Endothelial cell of umbilical vein (primary cell): ENCODE measurements at regions of chr18 and their contacts with region 1.

Region 1: DNA sequence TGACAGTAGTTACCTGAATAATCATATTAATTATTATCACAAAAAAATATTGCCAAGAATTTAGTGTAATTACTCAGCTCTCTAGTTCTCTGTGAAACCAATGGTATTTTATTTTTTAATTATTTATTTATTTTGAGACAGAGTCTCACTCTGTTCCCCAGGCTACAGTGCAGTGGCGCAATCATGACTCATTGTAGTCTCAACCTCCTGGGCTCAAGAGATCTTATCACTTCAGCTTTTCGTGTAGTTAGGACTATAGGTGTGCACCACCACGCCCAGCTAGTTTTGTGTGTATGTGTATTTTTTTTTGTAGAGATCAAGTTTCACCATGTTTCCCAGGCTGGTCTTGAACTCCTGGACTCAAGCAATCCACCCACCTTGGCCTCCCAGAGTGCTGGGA is 440.4 kb upstream of the CDH20 start:
- DNase-seq: no peak
- H3K4me3 ChIP-seq: no peak overlapping the region
- H3K27ac ChIP-seq: peak overlapping the region; percentile 68
- H3K4me1 ChIP-seq: peaks cover 29% of the 10 kb centered on the region
- H3K27me3 ChIP-seq: no peaks in the 10 kb centered on the region
- CTCF ChIP-seq: no peak
- POLR2A ChIP-seq: no peak

Region 2: DNA sequence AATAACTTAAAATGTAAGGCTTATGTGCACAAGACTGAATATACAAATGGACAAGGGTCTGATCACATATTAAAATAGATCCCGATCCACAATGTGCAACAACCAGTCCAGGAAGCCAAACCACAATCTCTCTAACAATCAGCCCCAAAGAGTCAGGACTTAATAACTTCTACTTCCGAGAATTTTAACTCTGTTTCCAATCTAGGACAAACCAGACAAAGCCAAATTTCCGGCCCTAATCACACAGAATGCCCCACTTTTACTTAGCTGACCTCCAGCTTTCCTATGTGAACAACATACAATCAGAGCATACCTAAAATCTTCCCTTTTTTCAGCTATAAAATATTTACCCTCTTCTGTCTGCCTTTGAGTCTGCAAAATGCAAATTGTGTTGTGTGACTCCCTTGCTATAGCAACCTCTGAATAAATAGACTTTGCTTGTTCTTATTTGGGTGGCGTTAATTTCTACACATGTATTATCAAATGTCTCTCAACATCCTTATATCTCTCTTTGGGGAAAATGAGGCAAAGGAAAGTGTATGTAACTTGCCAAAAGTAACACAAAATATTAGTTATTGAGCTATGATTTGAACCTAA is 138.3 kb before region 1 on chr18:
- CTCF ChIA-PET with region 1: no interaction called
- POLR2A ChIA-PET with region 1: no interaction called
- dilution Hi-C with region 1: no loop called
- intact Hi-C with region 1: loop called (anchors 5 kb)
- DNase-seq: peak; percentile 87
- H3K4me3 ChIP-seq: peak overlapping the region in 1 of 3 experiments; percentile 23
- H3K27ac ChIP-seq: peak overlapping the region; percentile 55
- H3K4me1 ChIP-seq: peaks cover 23% of the 10 kb centered on the region
- H3K27me3 ChIP-seq: no peaks in the 10 kb centered on the region
- CTCF ChIP-seq: no peak
- POLR2A ChIP-seq: no peak

Region 3: GRCh38 chr18:60873708-60874107 is 19.1 kb before region 1 on chr18:
- CTCF ChIA-PET with region 1: interaction called, 6 read pairs
- POLR2A ChIA-PET with region 1: interaction called, 9 read pairs
- dilution Hi-C with region 1: no loop called
- intact Hi-C with region 1: loop called (anchors 2 kb)
- DNase-seq: peak; percentile 73
- H3K4me3 ChIP-seq: no peak overlapping the region
- H3K27ac ChIP-seq: no peak overlapping the region
- H3K4me1 ChIP-seq: peaks cover 19% of the 10 kb centered on the region
- H3K27me3 ChIP-seq: no peaks in the 10 kb centered on the region
- CTCF ChIP-seq: no peak
- POLR2A ChIP-seq: no peak

Region 4: DNA sequence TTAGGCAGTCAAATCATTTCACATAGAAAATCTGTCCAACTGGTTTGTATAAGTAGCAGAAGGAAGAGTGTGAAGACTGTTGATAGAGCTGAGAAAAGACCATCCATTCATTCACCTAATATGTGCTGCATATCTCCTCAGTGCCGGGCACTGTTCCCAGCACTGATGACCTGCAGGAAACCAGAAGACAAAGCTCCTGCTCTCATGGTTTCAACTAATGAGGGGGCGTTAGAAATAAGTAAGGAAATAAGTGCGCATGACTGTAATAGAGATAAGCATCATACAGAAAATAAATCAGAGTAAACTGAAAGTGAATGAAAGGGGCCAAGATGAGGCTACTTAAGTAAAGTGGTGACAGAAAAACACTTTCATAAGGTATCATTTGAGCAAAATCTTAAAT is 12.8 kb after region 1 on chr18:
- CTCF ChIA-PET with region 1: interaction called, 12 read pairs
- POLR2A ChIA-PET with region 1: no interaction called
- dilution Hi-C with region 1: no loop called
- intact Hi-C with region 1: no loop called
- DNase-seq: peak; percentile 86
- H3K4me3 ChIP-seq: no peak overlapping the region
- H3K27ac ChIP-seq: no peak overlapping the region
- H3K4me1 ChIP-seq: peaks cover 6% of the 10 kb centered on the region
- H3K27me3 ChIP-seq: no peaks in the 10 kb centered on the region
- CTCF ChIP-seq: no peak
- POLR2A ChIP-seq: no peak

Region 5: DNA sequence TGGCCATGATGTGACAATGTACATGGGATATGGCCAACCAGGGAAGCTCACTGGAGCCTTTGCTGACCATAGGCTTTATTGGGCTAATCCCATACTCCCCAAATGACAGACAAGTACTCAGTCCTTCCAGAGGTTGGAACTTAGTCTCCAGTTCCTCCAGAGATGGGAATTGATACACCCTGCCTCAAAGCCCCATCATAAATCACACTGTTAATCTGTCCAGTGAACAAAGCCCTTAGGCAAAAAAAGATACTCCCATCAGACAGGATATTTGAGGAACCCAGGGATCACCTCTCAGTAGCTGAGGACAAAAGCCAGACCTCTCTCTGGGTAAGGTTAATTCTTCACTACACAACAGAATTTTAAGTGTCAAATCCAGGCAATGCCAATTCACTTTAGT is 192.9 kb after region 1 on chr18:
- CTCF ChIA-PET with region 1: no interaction called
- POLR2A ChIA-PET with region 1: no interaction called
- dilution Hi-C with region 1: no loop called
- intact Hi-C with region 1: no loop called
- DNase-seq: no peak
- H3K4me3 ChIP-seq: no peak overlapping the region
- H3K27ac ChIP-seq: no peak overlapping the region
- H3K4me1 ChIP-seq: no peaks in the 10 kb centered on the region
- H3K27me3 ChIP-seq: no peaks in the 10 kb centered on the region
- CTCF ChIP-seq: no peak
- POLR2A ChIP-seq: no peak